CD4-positive, alpha-beta T cell (primary cell): ENCODE measurements at regions of chrX and their contacts with region 1.

Region 1: GRCh38 chrX:101051549-101052302 is at the start of gene TRMT2B:
- DNase-seq: peak; percentile 65 to 88 (median 80)
- ATAC-seq: peak; percentile 85
- H3K4me3 ChIP-seq: peak within 1 kb of the TSS; percentile 78
- H3K4me3 Mint-ChIP-seq: peak within 1 kb of the TSS; percentile 90
- H3K27ac ChIP-seq: peak within 1 kb of the TSS; percentile 77 to 97
- H3K27ac Mint-ChIP-seq: peak within 1 kb of the TSS; percentile 95
- H3K4me1 ChIP-seq: peaks cover 29% of the 10 kb centered on the region
- H3K4me1 Mint-ChIP-seq: peaks cover 36% of the 10 kb centered on the region
- H3K27me3 ChIP-seq: no peaks in the 10 kb centered on the region
- H3K27me3 Mint-ChIP-seq: no peaks in the 10 kb centered on the region
- CTCF ChIP-seq: no peak
- total RNA-seq, gene TRMT2B: 27.9 to 28.0 TPM

Region 2: GRCh38 chrX:101097546-101098453 is 46.1 kb after region 1 on chrX and contains the start of gene CENPI:
- CTCF ChIA-PET with region 1: no interaction called
- POLR2A ChIA-PET with region 1: interaction called, 8 read pairs
- intact Hi-C with region 1: loop called (anchors 2 kb)
- DNase-seq: peak; percentile 86 to 96 (median 91)
- ATAC-seq: peak; percentile 99
- H3K4me3 ChIP-seq: peak within 1 kb of the TSS; percentile 67
- H3K4me3 Mint-ChIP-seq: peak within 1 kb of the TSS; percentile 92
- H3K27ac ChIP-seq: peak within 1 kb of the TSS; percentile 66 to 87
- H3K27ac Mint-ChIP-seq: peak within 1 kb of the TSS; percentile 95
- H3K4me1 ChIP-seq: peaks cover 7% of the 10 kb centered on the region
- H3K4me1 Mint-ChIP-seq: peaks cover 22% of the 10 kb centered on the region
- H3K27me3 ChIP-seq: no peaks in the 10 kb centered on the region
- H3K27me3 Mint-ChIP-seq: no peaks in the 10 kb centered on the region
- CTCF ChIP-seq: no peak
- total RNA-seq, gene CENPI: 0.28 to 0.49 TPM